A549 (cell line): ENCODE measurements at regions of chr4 and their contacts with region 1.

Region 1: GRCh38 chr4:153142700-153143438 is 61.4 kb upstream of the TRIM2 start:
- DNase-seq: peak; percentile 62 to 70
- ATAC-seq: peak; percentile 82 to 90
- H3K4me3 ChIP-seq: 0 out of 3 replicates have a peak overlapping the region, but pooled peaks have one; percentile 13
- H3K27ac ChIP-seq: peak overlapping the region; percentile 75 to 81
- H3K4me1 ChIP-seq: peaks cover 33% of the 10 kb centered on the region
- CTCF ChIP-seq: peak; percentile 88
- EP300 ChIP-seq: no peak
- POLR2A ChIP-seq: no peak
- RAD21 ChIP-seq: peak; percentile 85 to 93

Region 2: DNA sequence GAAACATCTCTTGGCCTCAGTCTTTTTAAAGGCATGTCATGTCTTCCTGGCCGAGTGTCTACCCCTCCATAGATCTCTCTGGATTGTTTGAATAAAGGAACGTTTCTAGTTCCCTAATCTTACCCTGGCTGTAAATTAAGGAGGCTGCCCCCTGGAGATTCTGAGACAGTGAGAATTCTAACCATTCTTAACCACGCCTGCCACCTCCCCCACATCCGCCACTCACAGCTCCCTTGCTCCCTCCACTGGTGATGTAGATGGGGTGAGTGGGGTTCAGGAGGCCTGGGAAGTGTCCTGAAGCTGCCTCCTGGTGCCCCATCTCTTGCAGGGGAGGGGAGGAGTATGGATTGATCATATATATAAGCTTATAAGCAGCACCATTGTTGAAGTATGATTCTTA is 13.4 kb after region 1 on chr4:
- CTCF ChIA-PET with region 1: interaction called, 16 read pairs
- POLR2A ChIA-PET with region 1: no interaction called
- DNase-seq: no peak
- ATAC-seq: peak in 1 of 2 experiments; percentile 21; a peak in 2 of 6 replicates
- H3K4me3 ChIP-seq: no peak overlapping the region
- H3K27ac ChIP-seq: peak overlapping the region; percentile 35 to 58; a peak in 3 of 6 replicates
- H3K4me1 ChIP-seq: peaks cover 40% of the 10 kb centered on the region
- CTCF ChIP-seq: no peak
- EP300 ChIP-seq: no peak
- POLR2A ChIP-seq: no peak
- RAD21 ChIP-seq: no peak

Region 3: DNA sequence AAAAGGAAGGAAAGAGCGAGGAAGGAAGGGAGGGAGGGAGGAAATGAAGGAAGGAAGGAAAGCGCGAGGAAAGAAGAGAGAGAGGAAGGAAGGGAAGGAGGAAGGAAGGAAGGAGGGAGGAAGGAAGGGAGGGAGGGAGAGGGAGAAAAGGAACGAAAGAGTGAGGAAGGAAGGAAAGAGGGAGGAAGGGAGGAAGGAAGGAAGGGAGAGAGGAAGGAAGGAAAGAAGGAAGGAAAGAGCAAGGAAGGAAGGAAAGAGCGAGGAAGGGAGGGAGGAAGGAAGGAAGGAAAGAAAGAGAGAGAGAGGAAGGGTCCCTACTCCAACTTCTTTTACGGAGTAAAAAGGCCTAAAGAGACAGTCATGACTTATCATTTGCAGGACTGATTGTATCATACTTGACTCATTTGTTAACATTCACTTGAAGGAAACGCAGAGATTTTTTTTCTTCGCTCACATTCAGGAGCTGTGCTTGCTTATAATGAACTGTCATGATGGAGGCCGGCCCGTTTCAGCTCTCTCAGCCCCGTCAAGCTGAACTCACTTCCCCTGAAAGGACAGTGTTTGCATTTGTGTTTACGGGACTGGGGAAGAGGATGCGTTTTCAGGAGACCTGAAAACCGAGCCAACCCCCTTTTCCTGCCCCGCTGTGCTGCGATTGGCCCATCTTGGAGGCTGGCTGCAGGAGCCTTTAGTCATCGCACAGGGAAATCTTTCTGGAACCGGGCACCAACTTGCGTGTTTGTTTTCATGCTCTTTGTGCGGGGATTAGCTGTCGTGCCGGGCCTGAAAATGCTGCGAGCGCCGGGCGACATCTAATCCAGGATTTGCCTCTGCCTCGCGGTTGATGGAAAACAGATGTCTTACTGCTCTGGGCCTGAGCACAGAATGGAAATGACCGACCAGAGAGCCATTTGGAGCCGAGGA is 79.2 kb after region 1 on chr4:
- CTCF ChIA-PET with region 1: no interaction called
- POLR2A ChIA-PET with region 1: no interaction called
- DNase-seq: no peak
- ATAC-seq: no peak
- H3K4me3 ChIP-seq: no peak overlapping the region
- H3K27ac ChIP-seq: no peak overlapping the region
- H3K4me1 ChIP-seq: no peaks in the 10 kb centered on the region
- CTCF ChIP-seq: no peak
- EP300 ChIP-seq: no peak
- POLR2A ChIP-seq: no peak
- RAD21 ChIP-seq: no peak

Region 4: GRCh38 chr4:153318696-153319320 is 175.9 kb after region 1 on chr4:
- CTCF ChIA-PET with region 1: interaction called, 10 read pairs
- POLR2A ChIA-PET with region 1: no interaction called
- DNase-seq: peak; percentile 30 to 40
- ATAC-seq: peak; percentile 85 to 87
- H3K4me3 ChIP-seq: no peak overlapping the region
- H3K27ac ChIP-seq: no peak overlapping the region
- H3K4me1 ChIP-seq: no peaks in the 10 kb centered on the region
- CTCF ChIP-seq: peak; percentile 70
- EP300 ChIP-seq: no peak
- POLR2A ChIP-seq: no peak
- RAD21 ChIP-seq: peak; percentile 71 to 74; a peak in 4 of 5 replicates